Common myeloid progenitor, CD34-positive (primary cell): ENCODE measurements at regions of chr6 and their contacts with region 1.

Region 1: DNA sequence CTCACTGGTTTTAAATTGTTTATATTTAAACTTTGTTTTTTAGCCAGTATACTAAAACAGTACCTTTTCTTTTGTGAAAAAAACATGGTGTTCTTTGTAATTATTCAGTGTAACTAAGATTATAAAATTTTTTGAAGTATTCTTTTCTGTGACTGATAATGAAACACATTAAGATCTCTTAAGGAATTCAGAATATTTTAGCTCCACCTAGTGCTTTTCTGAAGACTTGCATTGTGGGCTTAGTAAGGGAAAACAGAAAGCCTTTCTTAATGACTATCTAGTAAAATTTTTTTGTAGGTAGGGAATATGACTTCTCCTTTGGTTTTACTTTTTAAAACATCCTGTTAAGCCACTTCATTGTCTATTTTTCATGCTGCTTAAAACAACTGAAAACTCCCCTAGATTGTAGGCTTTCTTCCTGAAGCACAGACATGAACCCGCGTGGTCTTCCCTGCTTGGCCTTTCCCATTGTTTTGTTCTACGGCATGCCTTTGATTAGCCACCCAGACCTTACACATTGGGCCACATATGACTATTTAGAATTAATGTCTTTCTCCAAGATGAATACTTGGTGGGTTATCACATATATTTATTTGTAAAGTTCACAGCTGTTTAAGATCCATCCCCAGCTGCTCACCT is 72.1 kb downstream of the AFDN start:
- DNase-seq: peak; percentile 41 to 64 (median 57)
- H3K4me3 ChIP-seq: no peak overlapping the region
- H3K27ac ChIP-seq: no peak overlapping the region
- H3K4me1 ChIP-seq: no peaks in the 10 kb centered on the region
- H3K27me3 ChIP-seq: peaks cover 0 to 3% (median 0%) of the 10 kb centered on the region in 5 experiments

Region 2: GRCh38 chr6:167485186-167485978 is 413.4 kb before region 1 on chr6:
- CTCF ChIA-PET with region 1: interaction called, 69 read pairs
- POLR2A ChIA-PET with region 1: no interaction called
- DNase-seq: peak; percentile 15 to 44 (median 29)
- H3K4me3 ChIP-seq: no peak overlapping the region
- H3K27ac ChIP-seq: no peak overlapping the region
- H3K4me1 ChIP-seq: no peaks in the 10 kb centered on the region
- H3K27me3 ChIP-seq: peaks cover 0 to 18% (median 3%) of the 10 kb centered on the region in 5 experiments